Activated CD4-positive, alpha-beta T cell treated with anti-CD3 and anti-CD28 coated beads, Interleukin-2, amount 10 ng/mL, durations not matched to agents 7 days and 5 days (primary cell): ENCODE measurements at regions of chr10 and their contacts with region 1.

Region 1: GRCh38 chr10:110170142-110170971 is 37.0 kb upstream of the MXI1 start:
- DNase-seq: no peak
- H3K4me3 Mint-ChIP-seq: no peak overlapping the region
- H3K27ac Mint-ChIP-seq: no peak overlapping the region
- H3K4me1 Mint-ChIP-seq: peaks cover 16% of the 10 kb centered on the region
- H3K27me3 Mint-ChIP-seq: peaks cover 70% of the 10 kb centered on the region

Region 2: DNA sequence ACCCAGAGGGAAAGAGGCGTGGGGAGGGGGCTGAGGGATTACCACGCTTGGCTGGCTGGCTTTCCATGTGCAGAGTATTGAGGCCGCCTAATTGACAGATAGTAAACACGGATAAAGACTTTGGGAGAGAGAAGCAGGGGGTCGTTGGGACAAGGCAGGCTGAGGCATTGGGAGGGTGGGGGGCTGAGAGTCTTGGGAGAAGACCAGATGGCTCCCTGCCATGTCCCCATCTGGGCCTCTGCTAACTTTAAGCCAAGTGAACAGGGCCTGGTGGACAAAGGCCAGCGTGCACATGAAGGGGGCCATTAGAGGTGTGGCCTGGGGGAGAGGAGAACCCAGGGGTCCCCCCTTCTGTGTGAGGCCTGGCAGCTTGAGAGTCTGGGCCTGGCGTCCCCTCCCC is 18.4 kb before region 1 on chr10:
- CTCF ChIA-PET with region 1: interaction called, 8 read pairs
- POLR2A ChIA-PET with region 1: interaction called, 13 read pairs
- DNase-seq: no peak
- H3K4me3 Mint-ChIP-seq: no peak overlapping the region
- H3K27ac Mint-ChIP-seq: no peak overlapping the region
- H3K4me1 Mint-ChIP-seq: peaks cover 25% of the 10 kb centered on the region
- H3K27me3 Mint-ChIP-seq: peaks cover 69% of the 10 kb centered on the region